OCI-LY7 (cell line): ENCODE measurements at regions of chr11 and their contacts with region 1.

Region 1: GRCh38 chr11:128630367-128631230 is 43.2 kb upstream of the ETS1 start:
- DNase-seq: peak; percentile 95
- H3K4me3 ChIP-seq: peak overlapping the region; percentile 3
- H3K27ac ChIP-seq: peak overlapping the region; percentile 97
- H3K4me1 ChIP-seq: peaks cover 71% of the 10 kb centered on the region
- CTCF ChIP-seq: peak; percentile 99

Region 2: GRCh38 chr11:127859941-127860354 is 770.7 kb before region 1 on chr11:
- CTCF ChIA-PET with region 1: no interaction called
- POLR2A ChIA-PET with region 1: no interaction called
- intact Hi-C with region 1: no loop called
- DNase-seq: no peak
- H3K4me3 ChIP-seq: no peak overlapping the region
- H3K27ac ChIP-seq: no peak overlapping the region
- H3K4me1 ChIP-seq: no peaks in the 10 kb centered on the region
- CTCF ChIP-seq: no peak

Region 3: DNA sequence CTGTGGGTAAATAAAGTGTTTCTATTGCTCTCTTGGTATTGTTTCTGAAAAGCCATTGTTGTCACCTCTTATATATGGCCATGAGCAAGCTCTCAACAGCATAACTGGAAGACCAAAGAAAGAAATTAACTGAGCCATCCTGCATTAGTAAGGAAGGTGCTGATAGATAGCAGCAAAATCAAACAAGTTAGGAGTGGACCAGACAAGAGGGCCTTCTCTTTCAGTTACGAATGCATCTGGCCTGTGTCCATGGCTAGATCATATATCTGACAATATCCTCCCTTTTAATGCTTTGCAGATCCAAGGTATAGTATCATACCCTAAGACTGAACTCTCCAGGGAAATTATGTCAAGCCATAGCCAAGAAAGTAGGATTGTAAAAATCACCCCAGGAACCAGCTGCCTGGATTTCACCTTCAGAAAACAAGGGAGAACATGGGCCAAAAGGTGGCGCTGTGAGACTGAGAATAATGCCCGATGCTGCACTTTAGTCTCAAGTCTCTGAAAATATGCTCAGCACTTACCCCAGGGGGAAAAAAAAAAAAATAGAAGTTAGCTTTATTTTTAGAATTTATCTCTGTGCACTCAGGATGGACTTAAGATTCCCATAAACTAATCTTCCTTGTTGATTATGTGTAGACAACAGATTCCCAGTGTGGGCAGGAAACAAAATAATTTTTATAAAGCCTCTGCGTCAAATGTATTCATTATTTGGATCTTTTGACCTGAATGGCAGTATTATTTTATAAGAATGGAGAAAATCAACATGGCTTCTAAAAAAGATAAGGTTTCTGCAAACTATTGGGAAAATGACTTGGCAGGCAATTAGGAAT is 458.3 kb before region 1 on chr11:
- CTCF ChIA-PET with region 1: interaction called, 6 read pairs
- POLR2A ChIA-PET with region 1: interaction called, 4 read pairs
- intact Hi-C with region 1: loop called (anchors 1 kb)
- DNase-seq: peak; percentile 80
- H3K4me3 ChIP-seq: no peak overlapping the region
- H3K27ac ChIP-seq: no peak overlapping the region
- H3K4me1 ChIP-seq: no peaks in the 10 kb centered on the region
- CTCF ChIP-seq: peak; percentile 95

Region 4: DNA sequence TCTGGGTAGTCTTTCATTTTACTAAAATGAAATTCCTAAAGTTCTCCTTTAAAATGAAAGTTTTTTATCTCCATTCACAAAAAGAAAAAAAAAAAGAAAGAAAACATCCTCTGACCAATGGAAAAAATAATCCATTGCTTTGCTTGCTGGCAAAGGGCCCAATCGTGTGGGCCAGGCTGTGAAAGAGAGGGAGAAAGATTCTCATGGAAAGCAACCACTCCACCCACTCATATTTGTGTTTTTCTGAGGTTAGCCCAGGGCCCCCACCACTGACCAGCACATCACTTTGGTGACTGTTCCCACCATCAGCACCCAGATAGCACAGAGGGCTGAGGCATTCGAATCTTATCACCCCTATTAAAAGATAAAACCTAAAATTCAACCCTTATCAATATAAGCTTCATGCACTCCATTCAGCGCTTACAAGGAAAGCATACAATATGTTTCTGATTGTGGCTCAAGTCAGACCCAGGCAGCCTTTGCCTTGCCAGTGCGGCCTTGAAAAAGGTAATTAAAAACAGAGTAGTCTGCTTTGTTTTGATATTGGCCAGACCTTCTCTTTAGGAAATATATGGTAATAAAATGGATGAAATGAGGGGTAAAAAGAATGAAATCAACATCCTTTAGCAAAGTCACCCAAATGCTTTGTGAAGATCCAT is 236.0 kb before region 1 on chr11:
- CTCF ChIA-PET with region 1: no interaction called
- POLR2A ChIA-PET with region 1: no interaction called
- intact Hi-C with region 1: no loop called
- DNase-seq: no peak
- H3K4me3 ChIP-seq: no peak overlapping the region
- H3K27ac ChIP-seq: no peak overlapping the region
- H3K4me1 ChIP-seq: peaks cover 12% of the 10 kb centered on the region
- CTCF ChIP-seq: no peak

Region 5: DNA sequence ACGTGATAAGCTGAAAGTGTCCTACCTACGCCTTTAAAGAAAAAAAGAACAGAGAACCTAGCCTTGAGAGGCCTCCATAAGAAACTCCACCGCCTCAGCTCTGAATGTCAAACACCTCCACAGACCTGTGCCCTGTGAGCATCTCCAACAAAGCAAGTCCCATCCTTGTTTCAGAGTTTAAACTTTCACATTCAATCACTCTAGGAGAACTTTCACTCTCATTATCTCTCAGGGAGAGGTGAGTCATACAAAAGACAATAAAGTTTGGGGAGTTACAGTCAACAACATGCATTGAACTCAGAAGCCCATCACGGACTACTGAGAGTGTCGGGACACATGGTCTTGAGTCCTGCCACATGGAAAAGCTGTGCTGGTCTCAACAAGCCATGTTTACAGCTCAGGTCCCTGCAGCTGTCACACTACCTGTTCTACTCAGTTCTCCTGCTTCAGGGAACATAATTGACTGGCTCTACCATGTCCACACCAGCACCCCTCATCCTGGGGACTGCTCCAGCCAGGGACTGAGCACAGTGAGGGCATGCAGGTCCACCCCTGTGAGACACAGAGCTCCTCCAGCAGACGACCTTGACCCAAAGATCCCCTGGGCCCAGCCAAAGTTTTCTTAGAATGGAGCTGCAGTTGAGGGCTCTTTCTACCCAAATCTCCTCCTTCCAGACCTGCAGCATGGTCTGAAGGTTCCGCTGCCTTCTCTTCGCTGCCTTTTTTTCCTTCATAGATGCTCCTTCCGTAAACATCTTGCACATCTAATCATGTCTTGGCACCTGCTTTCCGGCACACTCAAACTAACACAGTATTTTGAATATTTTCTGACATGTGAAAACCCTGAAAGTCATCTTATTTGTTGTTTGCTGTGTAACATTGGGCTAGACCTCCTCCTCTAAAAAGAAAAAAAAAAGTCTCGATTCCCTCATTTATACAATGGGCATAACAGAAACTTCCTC is 158.2 kb before region 1 on chr11:
- CTCF ChIA-PET with region 1: interaction called, 6 read pairs
- POLR2A ChIA-PET with region 1: interaction called, 44 read pairs
- intact Hi-C with region 1: loop called (anchors 1 kb)
- DNase-seq: peak; percentile 61
- H3K4me3 ChIP-seq: peak overlapping the region; percentile 51
- H3K27ac ChIP-seq: peak overlapping the region; percentile 98
- H3K4me1 ChIP-seq: peaks cover 100% of the 10 kb centered on the region
- CTCF ChIP-seq: no peak

Region 6: DNA sequence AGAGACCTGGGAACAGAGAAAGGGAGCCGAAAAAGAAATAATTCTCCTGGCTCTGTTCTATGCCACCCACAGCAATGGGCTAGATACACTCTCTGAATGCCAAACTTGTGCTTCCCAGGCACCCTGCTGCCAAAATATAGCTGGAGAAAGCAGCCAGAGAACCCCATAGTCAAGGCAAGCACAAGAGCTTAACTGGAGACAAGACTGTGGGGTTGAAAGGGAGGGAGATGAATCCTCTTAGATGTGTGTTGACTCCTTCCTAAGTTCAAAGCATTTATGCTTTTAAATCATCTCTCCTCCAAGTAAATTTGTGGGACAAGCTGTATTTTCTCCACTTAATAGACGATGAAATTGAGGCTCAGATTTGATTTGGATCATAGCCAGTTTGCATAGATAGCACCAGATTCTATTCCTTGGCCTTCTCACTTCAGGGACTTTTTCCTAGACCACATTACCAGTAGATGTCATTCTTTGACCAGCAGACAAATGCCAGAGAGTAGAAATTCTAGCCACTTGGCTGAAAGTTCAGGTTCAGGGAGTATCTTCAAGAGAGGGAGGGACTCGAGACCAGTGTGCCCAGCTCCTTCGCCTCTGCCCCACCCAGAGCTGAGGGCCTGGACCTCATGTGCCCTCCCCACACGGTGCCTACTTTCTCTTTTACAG is 26.7 kb before region 1 on chr11:
- CTCF ChIA-PET with region 1: interaction called, 78 read pairs
- POLR2A ChIA-PET with region 1: interaction called, 631 read pairs
- intact Hi-C with region 1: loop called (anchors 1 kb)
- DNase-seq: peak; percentile 80
- H3K4me3 ChIP-seq: no peak overlapping the region
- H3K27ac ChIP-seq: peak overlapping the region; percentile 33
- H3K4me1 ChIP-seq: peaks cover 81% of the 10 kb centered on the region
- CTCF ChIP-seq: peak; percentile 77

Region 7: GRCh38 chr11:128653801-128654231 is 23.2 kb after region 1 on chr11:
- CTCF ChIA-PET with region 1: no interaction called
- POLR2A ChIA-PET with region 1: no interaction called
- intact Hi-C with region 1: no loop called
- DNase-seq: no peak
- H3K4me3 ChIP-seq: no peak overlapping the region
- H3K27ac ChIP-seq: no peak overlapping the region
- H3K4me1 ChIP-seq: peaks cover 7% of the 10 kb centered on the region
- CTCF ChIP-seq: no peak

Region 8: DNA sequence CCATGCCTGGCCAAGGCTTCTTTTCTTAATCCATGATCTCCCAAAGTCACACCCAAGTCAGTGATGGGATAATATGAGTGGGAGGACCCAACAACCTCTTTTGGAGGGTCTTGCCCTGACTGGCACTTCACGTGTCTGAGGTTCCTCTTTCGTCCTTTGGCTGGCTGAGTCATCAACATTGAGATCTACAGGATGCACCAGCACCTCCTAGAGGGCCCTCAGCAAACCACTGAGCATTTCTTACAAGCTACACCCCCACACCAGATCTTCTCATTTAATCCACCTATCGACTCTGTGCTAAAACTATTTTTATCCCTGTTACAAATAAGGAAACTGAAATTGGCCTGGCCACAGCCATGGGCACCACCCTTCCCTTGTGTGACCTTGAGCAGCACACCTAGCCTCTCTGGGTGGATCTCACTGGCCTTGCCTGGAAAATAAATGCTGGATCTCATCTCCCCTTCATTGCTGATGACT is 126.7 kb after region 1 on chr11:
- CTCF ChIA-PET with region 1: interaction called, 6 read pairs
- POLR2A ChIA-PET with region 1: interaction called, 8 read pairs
- intact Hi-C with region 1: loop called (anchors 1 kb)
- DNase-seq: peak; percentile 88
- H3K4me3 ChIP-seq: no peak overlapping the region
- H3K27ac ChIP-seq: peak overlapping the region; percentile 9
- H3K4me1 ChIP-seq: peaks cover 53% of the 10 kb centered on the region
- CTCF ChIP-seq: peak; percentile 93

Region 9: DNA sequence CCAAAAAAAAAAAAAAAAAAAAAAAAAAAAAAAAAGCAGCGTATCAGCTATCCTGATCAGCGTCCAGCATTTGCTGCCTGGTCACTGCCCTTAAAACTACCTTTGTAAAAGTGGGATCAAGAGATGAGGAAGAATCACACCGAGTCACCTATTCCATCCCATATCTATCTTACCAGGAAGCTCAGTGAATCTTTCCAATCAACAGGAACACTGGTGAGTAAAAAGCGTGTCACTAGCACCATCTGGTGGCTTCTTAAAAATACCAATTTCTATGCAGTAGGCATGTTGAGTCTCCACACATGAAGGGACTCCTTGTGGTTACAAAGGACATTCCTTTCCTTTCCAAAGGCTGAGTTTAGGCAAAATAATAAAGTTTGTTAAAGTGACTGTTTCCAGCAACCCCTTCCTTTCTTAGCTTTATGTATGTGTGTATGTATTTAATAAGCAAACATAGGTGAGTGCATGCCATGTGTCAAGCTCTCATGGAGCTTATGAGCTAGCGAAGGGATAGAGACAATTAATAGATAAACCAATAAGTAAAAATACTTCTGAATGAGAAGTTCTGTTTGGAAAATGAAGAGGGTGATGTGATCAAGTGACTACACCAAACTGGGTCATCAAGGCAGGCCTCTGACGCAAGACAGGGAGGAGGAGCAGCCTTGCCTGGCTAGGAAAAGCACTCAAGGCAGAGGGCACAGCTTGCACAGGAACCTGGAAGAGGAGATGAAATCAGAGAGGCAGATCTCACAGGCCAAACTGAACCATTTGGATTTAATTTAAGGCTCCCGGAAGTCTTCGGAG is 326.0 kb after region 1 on chr11:
- CTCF ChIA-PET with region 1: no interaction called
- POLR2A ChIA-PET with region 1: no interaction called
- intact Hi-C with region 1: loop called (anchors 10 kb)
- DNase-seq: peak; percentile 65
- H3K4me3 ChIP-seq: no peak overlapping the region
- H3K27ac ChIP-seq: no peak overlapping the region
- H3K4me1 ChIP-seq: no peaks in the 10 kb centered on the region
- CTCF ChIP-seq: peak; percentile 89